ENCODE measurements at regions of chr5 and their contacts with region 1.

Region 1: DNA sequence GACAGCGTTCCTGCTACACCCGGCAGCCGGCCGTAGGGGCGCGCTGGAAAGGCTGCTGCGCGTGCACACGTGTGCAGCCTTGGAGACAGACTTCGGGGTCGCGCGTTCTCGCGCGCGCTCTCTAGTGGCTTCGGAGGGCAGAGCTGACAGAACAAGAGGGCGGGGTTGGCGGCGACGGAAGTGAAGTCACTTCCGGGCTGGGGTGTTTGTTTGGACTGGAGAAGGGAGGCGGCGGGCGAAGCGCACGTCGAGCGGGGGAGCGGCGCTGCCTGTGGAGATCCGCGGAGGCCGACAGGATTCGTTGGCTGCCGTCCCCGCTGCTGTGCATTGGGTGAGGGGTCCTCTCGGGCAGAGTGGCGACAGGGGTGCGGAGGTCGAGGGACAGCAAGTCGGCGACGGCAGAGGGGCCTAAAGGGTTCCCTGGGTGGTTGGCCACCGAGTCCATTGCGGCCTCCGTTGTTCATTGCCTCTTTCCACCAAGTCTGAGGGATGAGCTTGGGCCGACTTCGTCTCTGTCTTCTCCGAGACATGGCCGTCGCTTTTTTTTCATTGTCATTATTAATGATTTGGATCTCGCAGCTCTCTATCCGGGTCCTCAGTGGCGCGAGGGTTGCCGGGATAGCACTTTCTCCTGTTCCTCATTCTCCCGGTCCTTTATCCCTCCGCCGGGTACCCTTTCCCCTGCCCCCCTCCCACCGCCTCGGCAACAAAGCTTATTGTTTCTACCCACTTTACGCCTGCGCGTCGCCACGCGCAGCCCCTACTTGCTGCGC is at the start of gene PAIP2:
- DNase-seq: peak; percentile 95
- H3K4me3 Mint-ChIP-seq: peak within 1 kb of the TSS; percentile 94
- H3K27ac Mint-ChIP-seq: peak within 1 kb of the TSS; percentile 95
- H3K4me1 Mint-ChIP-seq: peaks cover 46% of the 10 kb centered on the region
- H3K27me3 Mint-ChIP-seq: no peaks in the 10 kb centered on the region
- total RNA-seq, gene PAIP2: 88.4 and 97.3 TPM in 2 replicates

Region 2: DNA sequence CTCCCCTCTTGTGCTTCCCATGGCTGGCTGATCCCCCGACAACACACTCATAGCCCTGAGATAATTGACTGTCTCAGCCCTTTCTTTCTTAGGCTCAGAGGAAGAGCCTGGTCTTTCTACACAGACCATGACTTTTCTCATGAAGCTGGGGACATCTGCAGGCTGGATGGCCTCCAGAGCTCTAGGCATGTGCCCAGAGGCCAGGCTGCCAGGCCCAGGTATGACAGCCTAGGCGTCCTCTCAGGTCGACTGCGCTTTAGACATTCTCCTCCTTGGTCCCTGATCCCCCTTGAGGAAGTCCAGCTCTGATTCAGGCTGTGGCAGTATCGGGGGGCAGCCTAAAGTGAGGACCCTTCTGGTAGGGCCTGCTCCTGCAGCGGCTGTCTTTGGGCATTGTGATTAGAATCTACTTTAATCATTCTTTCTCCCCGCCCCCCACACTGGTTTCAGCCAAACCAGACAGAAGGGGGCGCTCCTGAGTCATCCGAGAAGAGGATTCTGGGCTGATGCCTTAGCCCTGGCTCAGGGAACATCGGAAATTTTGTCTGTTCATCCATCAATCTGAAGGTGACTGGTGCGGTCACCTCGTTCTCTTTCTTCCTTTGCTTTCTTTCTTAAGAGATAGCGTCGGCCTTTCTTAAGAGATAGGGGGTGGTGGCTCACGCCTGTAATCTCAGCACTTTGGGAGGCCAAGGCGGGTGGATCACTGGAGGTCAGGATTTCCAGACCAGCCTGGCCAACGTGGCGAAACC is 700.1 kb before region 1 on chr5:
- intact Hi-C with region 1: loop called (anchors 5 kb)
- DNase-seq: peak; percentile 52
- H3K4me3 Mint-ChIP-seq: no peak overlapping the region
- H3K27ac Mint-ChIP-seq: no peak overlapping the region
- H3K4me1 Mint-ChIP-seq: no peaks in the 10 kb centered on the region
- H3K27me3 Mint-ChIP-seq: peaks cover 59% of the 10 kb centered on the region

Region 3: DNA sequence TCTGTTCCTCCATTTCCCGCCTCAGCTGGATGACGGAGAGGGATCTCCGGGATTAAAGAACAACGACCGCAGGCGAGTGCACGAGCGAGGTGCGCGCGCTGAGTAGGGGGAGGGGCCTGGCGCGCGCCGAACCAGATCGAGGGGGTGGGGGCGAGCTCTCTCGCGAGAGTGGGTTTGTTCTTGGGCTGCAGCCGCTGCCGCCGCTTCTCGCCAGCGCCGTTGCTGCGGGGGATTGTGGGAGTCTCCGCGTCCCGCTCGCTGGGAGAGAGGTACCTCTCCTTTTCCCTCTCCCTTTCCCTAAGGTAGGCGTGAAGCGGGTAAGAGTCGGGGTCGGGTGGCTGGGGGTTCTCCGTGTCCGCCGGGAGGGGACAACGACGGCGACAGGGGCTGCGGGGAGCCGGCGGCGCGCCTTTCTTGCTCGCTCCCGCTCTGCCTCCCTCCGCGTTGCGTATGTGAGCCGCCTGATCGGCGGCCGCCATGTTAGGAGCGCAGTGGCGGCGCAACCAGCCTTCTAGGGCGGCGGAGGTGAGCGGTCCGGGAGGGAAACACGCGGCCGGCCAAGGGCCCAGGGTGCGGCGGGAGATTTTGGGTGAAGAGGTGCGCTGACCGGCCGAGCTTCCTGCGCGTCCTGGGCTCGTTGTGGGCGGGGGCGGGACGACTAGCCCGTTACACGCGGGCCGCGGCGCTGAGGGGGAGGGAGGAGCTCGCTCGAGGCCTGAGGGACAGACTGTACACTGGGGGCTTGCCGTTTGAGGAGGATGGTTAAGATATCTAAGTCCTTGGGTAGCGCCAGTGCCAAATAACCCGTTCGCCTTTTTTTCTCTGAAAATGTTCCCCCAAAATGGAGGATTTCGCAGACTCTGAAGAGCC is 48.1 kb before region 1 on chr5 and contains the start of gene MATR3:
- intact Hi-C with region 1: loop called (anchors 1 kb)
- DNase-seq: peak; percentile 88
- H3K4me3 Mint-ChIP-seq: peak within 1 kb of the TSS; percentile 95
- H3K27ac Mint-ChIP-seq: peak within 1 kb of the TSS; percentile 94
- H3K4me1 Mint-ChIP-seq: peaks cover 37% of the 10 kb centered on the region
- H3K27me3 Mint-ChIP-seq: no peaks in the 10 kb centered on the region
- total RNA-seq, gene MATR3: 232 and 258 TPM in 2 replicates

Region 4: GRCh38 chr5:139312075-139312474 is 29.8 kb before region 1 on chr5:
- intact Hi-C with region 1: no loop called
- DNase-seq: no peak
- H3K4me3 Mint-ChIP-seq: no peak overlapping the region
- H3K27ac Mint-ChIP-seq: no peak overlapping the region
- H3K4me1 Mint-ChIP-seq: peaks cover 53% of the 10 kb centered on the region
- H3K27me3 Mint-ChIP-seq: no peaks in the 10 kb centered on the region

Region 5: GRCh38 chr5:139371482-139372435 is 29.9 kb after region 1 on chr5:
- intact Hi-C with region 1: loop called (anchors 2 kb)
- DNase-seq: no peak
- H3K4me3 Mint-ChIP-seq: peak overlapping the region; percentile 16
- H3K27ac Mint-ChIP-seq: peak overlapping the region; percentile 53
- H3K4me1 Mint-ChIP-seq: peaks cover 16% of the 10 kb centered on the region
- H3K27me3 Mint-ChIP-seq: no peaks in the 10 kb centered on the region

Region 6: DNA sequence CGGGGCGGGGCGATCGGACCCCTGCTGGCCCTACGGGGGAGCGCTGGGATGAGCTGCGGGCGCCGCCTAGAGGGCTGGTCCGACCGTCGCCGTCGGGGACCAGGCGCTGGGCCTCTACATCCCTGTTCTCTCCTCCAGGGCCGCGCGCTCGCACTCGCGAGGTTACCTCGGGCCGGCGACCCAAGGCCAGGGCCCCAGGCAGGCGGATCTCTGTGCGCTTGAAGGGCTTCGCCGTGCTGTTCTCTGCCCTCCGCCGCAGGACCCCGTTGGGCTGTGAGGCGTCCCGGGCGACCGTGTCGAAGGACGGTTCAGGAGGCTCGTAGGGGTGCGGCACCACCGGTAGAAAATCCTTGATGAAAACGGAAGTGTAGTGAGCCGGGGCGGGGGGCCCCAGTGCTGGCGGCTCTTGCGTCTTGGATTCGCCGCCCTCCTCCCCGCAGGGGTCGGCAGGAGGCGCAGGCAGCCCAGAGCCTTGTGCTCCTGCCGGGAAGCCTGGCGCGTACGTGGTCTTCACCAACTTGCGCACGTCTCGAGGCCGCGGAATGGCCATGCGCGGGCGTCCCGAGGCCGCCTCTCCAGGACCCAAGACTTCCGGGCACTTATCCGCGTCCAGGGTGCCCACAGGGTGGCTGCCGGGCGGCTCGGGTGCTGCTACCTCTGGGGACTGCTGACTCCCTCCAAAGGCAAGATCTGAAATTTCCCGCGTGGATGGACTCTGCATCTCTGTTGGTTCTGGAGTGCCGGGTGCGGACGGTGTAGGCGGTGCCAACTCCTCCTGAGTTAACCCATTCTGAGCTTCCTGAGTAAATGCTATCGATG is 51.1 kb after region 1 on chr5:
- intact Hi-C with region 1: loop called (anchors 1 kb)
- DNase-seq: peak; percentile 84
- H3K4me3 Mint-ChIP-seq: peak overlapping the region; percentile 96
- H3K27ac Mint-ChIP-seq: peak overlapping the region; percentile 95
- H3K4me1 Mint-ChIP-seq: peaks cover 58% of the 10 kb centered on the region
- H3K27me3 Mint-ChIP-seq: no peaks in the 10 kb centered on the region

Region 7: DNA sequence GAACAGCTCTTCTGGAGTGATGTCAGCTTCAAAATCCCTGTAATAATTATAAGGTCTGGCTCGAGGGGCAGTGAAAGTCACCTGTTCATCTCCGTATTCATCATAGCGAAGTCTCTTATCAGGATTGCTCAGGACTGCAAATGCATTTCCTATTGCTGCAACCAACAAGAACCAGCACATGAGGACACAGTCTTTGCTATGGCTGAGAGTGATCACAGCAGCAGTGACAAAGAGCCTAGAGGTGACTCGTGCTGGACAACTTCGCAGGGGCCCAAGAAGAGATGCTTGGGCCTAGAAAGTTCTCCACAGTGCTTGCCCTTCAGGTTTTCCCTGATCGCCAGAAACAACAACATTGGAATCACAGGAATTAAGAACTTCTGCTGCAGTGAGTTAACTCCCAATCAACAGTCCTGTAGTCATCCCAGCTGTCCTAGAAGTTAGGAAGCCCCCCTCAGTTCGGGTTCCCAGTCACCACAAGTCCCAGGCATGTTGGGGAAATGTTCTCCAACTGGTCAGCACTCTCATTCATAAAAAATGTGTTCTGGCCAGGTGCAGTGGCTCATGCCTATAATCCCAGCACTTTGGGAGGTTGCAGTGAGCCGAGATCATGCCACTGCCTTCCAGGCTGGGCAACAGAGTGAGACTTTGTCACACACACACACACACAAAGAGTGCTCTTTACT is 84.5 kb after region 1 on chr5:
- intact Hi-C with region 1: no loop called
- DNase-seq: no peak
- H3K4me3 Mint-ChIP-seq: no peak overlapping the region
- H3K27ac Mint-ChIP-seq: no peak overlapping the region
- H3K4me1 Mint-ChIP-seq: peaks cover 24% of the 10 kb centered on the region
- H3K27me3 Mint-ChIP-seq: no peaks in the 10 kb centered on the region

Measured in activated T-helper 1 cell treated with anti-CD3 and anti-CD28 coated beads, Interleukin-12 subunit alpha, Interleukin-12 subunit beta, Interleukin-2, Interleukin-4 antibody, amounts not matched to agents 30 ng/mL and 10 ng/mL and 1 ng/mL, durations not matched to agents 14 hours and 24 hours and 36 hours (primary cell).